AG04450 (cell line): ENCODE measurements at regions of chr22 and their contacts with region 1.

Region 1: DNA sequence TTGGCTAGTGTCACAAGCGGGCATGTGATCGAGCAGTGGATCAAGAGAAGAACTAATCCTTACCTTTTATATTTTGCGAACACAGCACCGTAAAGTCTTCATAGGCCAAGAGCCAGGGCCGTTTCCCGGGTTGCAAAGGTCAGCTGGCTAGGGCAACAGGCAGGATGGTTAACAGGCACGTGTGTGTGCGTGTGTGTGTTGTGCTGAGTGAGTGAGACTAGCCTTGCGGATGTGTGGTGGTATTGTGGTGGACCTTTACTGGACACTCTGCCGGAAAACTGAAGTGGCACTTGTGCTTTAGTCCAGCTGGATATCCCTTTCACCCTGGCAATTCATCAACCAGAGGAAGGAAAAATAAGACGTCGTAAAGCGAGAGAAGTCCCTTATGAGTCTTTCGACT is 176.7 kb downstream of the BCR start:
- DNase-seq: no peak
- H3K4me3 ChIP-seq: no peak overlapping the region
- H3K27ac ChIP-seq: no peak overlapping the region
- H3K27me3 ChIP-seq: peaks cover 8% of the 10 kb centered on the region
- CTCF ChIP-seq: no peak

Region 2: DNA sequence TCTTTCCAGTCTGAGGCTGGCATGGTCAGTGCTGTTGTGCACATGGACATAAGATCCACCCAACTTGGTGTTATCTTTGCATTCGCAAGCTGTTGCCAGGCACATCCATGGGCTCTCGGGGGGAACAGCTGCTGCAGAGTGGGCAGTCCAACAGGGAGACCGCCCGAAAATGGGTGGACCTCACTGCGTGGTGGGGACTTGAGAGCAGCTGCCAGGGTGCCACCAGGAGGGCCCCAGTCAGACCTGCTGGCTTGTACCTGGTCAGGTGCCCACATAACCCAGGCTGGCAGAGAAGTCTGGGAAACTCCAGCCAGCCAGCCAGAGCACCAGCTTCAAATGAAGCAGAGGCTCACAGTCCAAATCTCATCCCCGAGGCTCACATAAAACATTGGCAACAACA is 56.6 kb before region 1 on chr22:
- CTCF ChIA-PET with region 1: interaction called, 11 read pairs
- POLR2A ChIA-PET with region 1: no interaction called
- DNase-seq: no peak
- H3K4me3 ChIP-seq: no peak overlapping the region
- H3K27ac ChIP-seq: no peak overlapping the region
- H3K27me3 ChIP-seq: no peaks in the 10 kb centered on the region
- CTCF ChIP-seq: no peak